ENCODE measurements at regions of chr1 and their contacts with region 1.

Region 1: DNA sequence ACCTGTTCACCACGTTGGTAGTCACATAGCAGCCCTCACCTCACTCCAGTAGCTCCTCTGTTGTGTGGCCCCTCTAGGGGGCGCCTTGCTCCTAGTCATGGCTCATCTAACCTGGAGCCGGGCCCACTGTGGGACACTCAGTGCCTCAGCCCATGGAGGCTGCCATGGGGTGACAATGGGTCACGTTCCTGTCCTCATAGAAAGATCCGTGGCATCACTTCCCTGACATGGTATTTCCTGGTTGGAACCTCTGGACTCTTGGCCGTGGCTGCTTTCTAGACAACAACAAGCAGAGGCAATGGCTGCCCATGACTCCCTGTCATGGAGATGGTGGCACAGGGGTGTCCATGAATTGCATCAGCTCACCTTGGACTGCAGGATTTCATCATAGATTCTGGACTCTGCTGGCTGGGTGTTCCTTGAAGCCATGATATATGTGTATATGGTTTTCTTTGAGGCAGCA is 27.5 kb upstream of the SLAMF6 start:
- DNase-seq: peak; percentile 62
- H3K4me3 Mint-ChIP-seq: no peak overlapping the region
- H3K27ac Mint-ChIP-seq: no peak overlapping the region
- H3K4me1 Mint-ChIP-seq: peaks cover 2% of the 10 kb centered on the region
- H3K27me3 Mint-ChIP-seq: no peaks in the 10 kb centered on the region

Region 2: GRCh38 chr1:160244209-160244608 is 306.4 kb before region 1 on chr1:
- CTCF ChIA-PET with region 1: no interaction called
- POLR2A ChIA-PET with region 1: no interaction called
- DNase-seq: no peak
- H3K4me3 Mint-ChIP-seq: no peak overlapping the region
- H3K27ac Mint-ChIP-seq: no peak overlapping the region
- H3K4me1 Mint-ChIP-seq: no peaks in the 10 kb centered on the region
- H3K27me3 Mint-ChIP-seq: no peaks in the 10 kb centered on the region

Region 3: DNA sequence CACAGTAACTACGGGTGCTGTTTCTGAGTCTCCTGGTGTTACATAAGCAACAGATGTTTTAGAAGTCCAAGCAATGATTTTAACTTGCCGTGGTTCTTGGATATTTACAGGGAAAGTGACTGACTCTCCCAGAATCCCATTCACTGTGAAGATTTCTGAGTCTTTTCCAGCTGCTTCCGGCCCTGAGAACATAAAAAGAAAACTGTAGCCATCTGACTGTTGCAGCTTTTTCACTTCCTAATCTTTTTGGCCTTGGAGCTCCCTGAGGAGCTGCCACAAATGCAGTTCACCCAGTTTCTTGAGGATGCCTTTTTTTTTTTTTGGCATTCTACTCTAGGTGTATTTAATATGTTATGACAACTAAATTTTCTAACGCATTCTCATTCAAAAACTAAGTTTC is 15.0 kb after region 1 on chr1:
- CTCF ChIA-PET with region 1: no interaction called
- POLR2A ChIA-PET with region 1: no interaction called
- DNase-seq: no peak
- H3K4me3 Mint-ChIP-seq: no peak overlapping the region
- H3K27ac Mint-ChIP-seq: peak overlapping the region; percentile 55
- H3K4me1 Mint-ChIP-seq: peaks cover 82% of the 10 kb centered on the region
- H3K27me3 Mint-ChIP-seq: no peaks in the 10 kb centered on the region

Region 4: DNA sequence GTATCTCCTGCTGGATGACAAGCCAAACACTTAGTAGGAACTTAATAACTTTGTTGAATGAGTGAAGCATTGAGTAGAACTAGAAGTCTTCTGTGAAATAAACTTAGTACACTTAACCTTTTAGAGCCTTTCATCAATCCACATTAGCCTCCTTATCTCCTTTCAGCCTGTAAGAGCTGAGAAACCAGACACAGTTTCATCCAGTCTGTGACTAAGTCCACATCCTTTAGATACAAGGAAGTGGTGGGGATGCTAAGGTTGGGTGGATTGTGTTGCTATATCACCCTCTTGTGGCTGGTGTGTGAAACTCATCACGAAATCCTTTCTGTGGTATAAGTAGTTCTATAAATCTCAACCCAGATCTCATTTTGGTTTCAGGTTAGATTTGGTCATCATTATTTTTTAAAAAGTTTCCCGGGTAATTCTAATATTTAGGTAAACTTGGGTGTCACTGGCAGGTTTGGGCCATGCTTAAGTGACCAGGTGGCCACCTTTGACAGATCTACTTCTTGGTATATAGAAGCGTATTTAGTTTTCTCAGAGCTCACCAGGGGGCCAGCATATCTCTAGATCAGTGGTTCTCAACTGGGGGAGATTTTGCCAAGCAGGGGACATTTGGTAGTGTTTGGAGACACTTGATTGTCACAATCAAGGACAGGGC is 56.5 kb after region 1 on chr1:
- CTCF ChIA-PET with region 1: interaction called, 30 read pairs
- POLR2A ChIA-PET with region 1: interaction called, 7 read pairs
- DNase-seq: peak; percentile 70
- H3K4me3 Mint-ChIP-seq: no peak overlapping the region
- H3K27ac Mint-ChIP-seq: peak overlapping the region; percentile 58
- H3K4me1 Mint-ChIP-seq: peaks cover 59% of the 10 kb centered on the region
- H3K27me3 Mint-ChIP-seq: no peaks in the 10 kb centered on the region

Region 5: DNA sequence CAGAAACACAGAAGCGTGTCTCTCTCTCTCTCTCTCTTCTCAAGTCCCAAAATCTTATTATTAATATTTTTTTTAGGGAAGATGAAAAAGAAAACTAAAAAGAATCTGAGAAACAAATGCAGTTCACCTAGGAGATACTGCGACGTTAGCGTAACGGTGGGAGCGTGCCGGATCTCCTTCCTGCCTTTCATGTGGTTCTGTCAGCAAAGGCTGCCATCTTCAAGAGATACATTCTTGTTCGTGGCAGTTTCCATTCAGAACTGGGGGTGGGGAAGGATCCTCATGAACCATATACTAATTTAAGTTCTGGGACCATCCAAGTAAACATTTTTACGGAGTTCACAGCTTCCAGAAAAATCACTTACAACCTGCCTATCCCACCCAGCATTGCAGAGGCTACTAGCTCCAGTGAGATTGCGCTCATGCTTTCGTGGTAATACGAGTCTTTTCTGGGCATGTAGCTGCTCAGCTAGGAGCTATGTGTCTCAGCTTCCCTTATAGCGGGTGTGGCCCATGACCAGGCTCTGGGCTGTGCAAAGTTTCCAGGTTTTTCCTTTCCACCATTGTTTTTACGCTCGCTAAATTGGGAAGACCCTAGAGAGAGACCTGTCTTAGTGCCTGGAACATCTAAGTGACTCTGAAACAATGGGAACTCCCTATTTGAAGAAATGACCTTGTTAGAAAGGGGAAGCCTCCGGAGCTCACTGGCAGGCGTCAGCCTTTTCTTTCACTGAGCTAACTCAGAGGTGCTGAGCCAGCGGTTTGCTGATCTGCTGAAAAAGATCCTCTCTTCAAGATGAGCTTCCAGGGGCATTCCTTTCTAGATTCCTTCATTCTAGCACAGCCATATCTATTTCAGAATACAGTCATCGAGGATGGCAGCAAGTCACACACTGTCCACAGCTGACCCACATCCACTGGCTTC is 78.9 kb after region 1 on chr1:
- CTCF ChIA-PET with region 1: no interaction called
- POLR2A ChIA-PET with region 1: no interaction called
- DNase-seq: peak; percentile 81
- H3K4me3 Mint-ChIP-seq: peak overlapping the region; percentile 62
- H3K27ac Mint-ChIP-seq: peak overlapping the region; percentile 99
- H3K4me1 Mint-ChIP-seq: peaks cover 96% of the 10 kb centered on the region
- H3K27me3 Mint-ChIP-seq: no peaks in the 10 kb centered on the region